Ovary (tissue), 10 donors: ENCODE measurements at regions of chrX and their contacts with region 1.

Region 1: GRCh38 chrX:56253832-56254703 is 21.9 kb downstream of the KLF8 start:
- DNase-seq: no peak
- H3K4me3 ChIP-seq: no peak overlapping the region
- H3K27ac ChIP-seq: no peak overlapping the region
- H3K4me1 ChIP-seq: no peaks in the 10 kb centered on the region
- H3K27me3 ChIP-seq: no peaks in the 10 kb centered on the region
- CTCF ChIP-seq: no peak
- EP300 ChIP-seq: no peak
- POLR2A ChIP-seq: no peak

Region 2: DNA sequence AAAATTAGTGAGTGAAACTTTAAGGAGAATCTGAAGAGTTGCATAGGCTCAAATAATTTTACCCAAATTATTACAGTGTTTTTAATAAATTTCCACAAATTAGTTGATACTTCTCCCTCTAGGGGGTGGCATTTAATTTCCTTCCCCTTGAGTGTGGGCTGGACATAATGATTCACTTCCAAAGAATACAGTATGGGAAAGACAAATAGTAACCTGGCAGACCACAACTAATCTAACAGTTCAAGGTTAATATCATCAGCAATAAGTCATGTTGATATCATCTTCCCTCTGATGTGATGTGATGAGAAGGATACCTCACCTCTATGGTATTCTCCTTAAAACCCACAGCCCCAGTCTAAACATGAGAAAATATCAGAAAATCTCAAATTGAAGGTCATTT is 1275.6 kb before region 1 on chrX:
- intact Hi-C with region 1: loop called in 1 of 4 experiments (anchors 10 kb)
- DNase-seq: no peak
- H3K4me3 ChIP-seq: no peak overlapping the region
- H3K27ac ChIP-seq: no peak overlapping the region
- H3K4me1 ChIP-seq: no peaks in the 10 kb centered on the region
- H3K27me3 ChIP-seq: no peaks in the 10 kb centered on the region
- CTCF ChIP-seq: no peak
- EP300 ChIP-seq: no peak
- POLR2A ChIP-seq: no peak

Region 3: GRCh38 chrX:56366901-56367300 is 112.8 kb after region 1 on chrX:
- intact Hi-C with region 1: no loop called
- DNase-seq: peak in 1 of 5 donors; percentile 16
- H3K4me3 ChIP-seq: no peak overlapping the region
- H3K27ac ChIP-seq: no peak overlapping the region
- H3K4me1 ChIP-seq: no peaks in the 10 kb centered on the region
- H3K27me3 ChIP-seq: no peaks in the 10 kb centered on the region
- CTCF ChIP-seq: no peak
- EP300 ChIP-seq: no peak
- POLR2A ChIP-seq: no peak

Region 4: GRCh38 chrX:57070185-57070984 is 816.3 kb after region 1 on chrX:
- intact Hi-C with region 1: no loop called
- DNase-seq: no peak
- H3K4me3 ChIP-seq: no peak overlapping the region
- H3K27ac ChIP-seq: no peak overlapping the region
- H3K4me1 ChIP-seq: no peaks in the 10 kb centered on the region
- H3K27me3 ChIP-seq: no peaks in the 10 kb centered on the region
- CTCF ChIP-seq: no peak
- EP300 ChIP-seq: no peak
- POLR2A ChIP-seq: no peak